ENCODE measurements at regions of chr17 and their contacts with region 1.

Region 1: DNA sequence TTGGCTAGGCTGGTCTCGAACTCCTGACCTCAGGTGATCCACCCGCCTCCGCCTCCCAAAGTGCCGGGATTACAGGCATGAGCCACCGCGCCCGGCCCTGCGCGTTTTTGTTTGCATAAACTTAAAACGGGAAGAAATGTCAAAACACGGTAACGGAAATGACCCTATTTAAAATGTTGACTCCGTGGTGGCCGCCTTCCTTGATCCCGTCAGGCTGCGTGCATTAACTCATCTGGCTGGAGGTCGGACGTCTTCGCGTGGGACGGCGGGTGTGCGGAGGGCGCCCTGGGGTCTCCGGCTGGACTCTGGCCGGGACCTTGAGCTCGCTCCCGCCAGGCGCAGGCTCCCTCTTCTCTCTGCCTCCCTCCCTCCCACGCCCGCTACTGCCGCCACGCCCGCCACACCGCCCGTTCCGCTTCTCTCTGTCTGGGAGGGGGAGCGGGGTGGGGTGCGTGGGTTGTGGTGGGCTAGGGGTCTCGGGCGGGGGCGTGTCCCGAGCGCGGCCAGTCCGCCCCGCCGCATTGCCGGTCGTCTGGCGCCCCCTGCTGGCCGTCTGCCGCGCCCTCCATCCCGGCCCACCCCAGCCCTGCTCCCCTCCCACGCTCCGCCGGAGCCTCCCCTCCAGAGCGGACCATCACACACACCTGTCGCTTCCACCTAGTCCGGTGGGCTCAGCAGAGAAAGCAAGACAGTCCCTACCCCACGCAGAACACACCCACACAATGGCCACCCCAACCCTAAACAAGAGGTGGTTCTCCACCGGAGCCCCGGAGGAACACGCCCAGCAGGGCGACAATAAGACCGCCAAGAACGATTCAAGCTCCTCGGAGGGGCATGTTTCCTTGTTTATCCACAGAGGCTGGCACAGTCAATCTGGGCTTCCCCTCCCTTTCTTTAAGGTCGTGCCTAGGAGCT is 1.2 kb upstream of the CCDC42 start:
- DNase-seq: peak; percentile 85
- ATAC-seq: peak; percentile 91 to 93
- H3K4me3 ChIP-seq: peak overlapping the region; percentile 77
- H3K27ac ChIP-seq: peak overlapping the region; percentile 82
- H3K4me1 ChIP-seq: peaks cover 6% of the 10 kb centered on the region
- H3K27me3 ChIP-seq: peaks cover 3% of the 10 kb centered on the region
- CTCF ChIP-seq: peak; percentile 89

Region 2: DNA sequence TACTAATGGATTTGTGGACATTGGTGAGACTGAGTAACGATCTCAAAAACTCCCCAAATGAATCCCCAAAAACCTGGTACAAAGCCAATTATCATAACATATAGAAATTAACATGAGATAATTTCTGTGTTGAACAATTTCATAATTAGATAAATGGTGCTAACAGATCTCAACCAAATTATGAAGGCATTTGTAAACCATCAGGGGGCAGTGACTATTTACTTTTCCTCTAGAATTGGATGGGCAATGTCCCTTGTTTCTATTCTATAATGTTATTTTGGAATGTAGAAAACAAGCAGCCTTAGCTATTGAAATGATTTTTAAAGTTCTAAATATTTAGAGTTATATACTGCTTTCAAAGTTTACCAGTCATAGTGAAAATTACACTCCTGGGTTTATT is 173.1 kb before region 1 on chr17:
- intact Hi-C with region 1: loop called (anchors 5 kb)
- DNase-seq: no peak
- ATAC-seq: no peak
- H3K4me3 ChIP-seq: no peak overlapping the region
- H3K27ac ChIP-seq: no peak overlapping the region
- H3K4me1 ChIP-seq: no peaks in the 10 kb centered on the region
- H3K27me3 ChIP-seq: no peaks in the 10 kb centered on the region
- CTCF ChIP-seq: no peak

Region 3: GRCh38 chr17:8643860-8644506 is 101.9 kb before region 1 on chr17:
- intact Hi-C with region 1: no loop called
- DNase-seq: no peak
- ATAC-seq: no peak
- H3K4me3 ChIP-seq: no peak overlapping the region
- H3K27ac ChIP-seq: no peak overlapping the region
- H3K4me1 ChIP-seq: no peaks in the 10 kb centered on the region
- H3K27me3 ChIP-seq: no peaks in the 10 kb centered on the region
- CTCF ChIP-seq: no peak

Measured in lower lobe of right lung (tissue), 2 donors.